Thyroid gland (tissue), 4 donors: ENCODE measurements at regions of chr2 and their contacts with region 1.

Region 1: GRCh38 chr2:237691908-237692600 is 64.7 kb downstream of the LRRFIP1 start:
- DNase-seq: peak; percentile 95 to 96
- H3K4me3 ChIP-seq: peak overlapping the region; percentile 47 to 88 (median 87)
- H3K27ac ChIP-seq: peak overlapping the region; percentile 87 to 97 (median 95)
- H3K4me1 ChIP-seq: peaks cover 55 to 81% of the 10 kb centered on the region in 2 donors
- H3K27me3 ChIP-seq: no peaks in the 10 kb centered on the region
- CTCF ChIP-seq: no peak
- POLR2A ChIP-seq: peak; percentile 78 to 85

Region 2: DNA sequence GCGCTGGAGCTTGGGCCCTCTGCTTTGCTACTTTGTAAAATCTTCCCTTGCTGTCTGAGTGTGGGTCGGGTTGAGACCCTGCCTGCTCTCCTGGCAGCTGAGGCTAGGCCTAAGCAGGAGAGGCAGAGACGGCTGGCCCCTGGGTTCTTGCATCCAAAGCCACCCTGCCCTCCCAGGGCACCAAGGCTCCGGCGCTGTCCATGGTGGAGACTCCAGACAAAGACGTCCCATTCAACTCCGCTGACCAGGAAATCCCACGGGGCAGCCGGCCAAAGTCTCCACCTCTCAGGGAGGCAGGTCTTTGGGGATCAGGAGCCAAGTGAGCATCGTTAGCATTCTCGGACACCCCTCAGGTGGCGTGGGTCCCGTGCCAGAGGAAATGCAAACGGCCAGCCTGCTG is 128.2 kb before region 1 on chr2:
- intact Hi-C with region 1: no loop called
- DNase-seq: peak in 1 of 2 donors; percentile 38
- H3K4me3 ChIP-seq: no peak overlapping the region
- H3K27ac ChIP-seq: no peak overlapping the region
- H3K4me1 ChIP-seq: peaks cover 7 to 8% of the 10 kb centered on the region in 2 donors
- H3K27me3 ChIP-seq: no peaks in the 10 kb centered on the region
- CTCF ChIP-seq: no peak
- POLR2A ChIP-seq: no peak

Region 3: DNA sequence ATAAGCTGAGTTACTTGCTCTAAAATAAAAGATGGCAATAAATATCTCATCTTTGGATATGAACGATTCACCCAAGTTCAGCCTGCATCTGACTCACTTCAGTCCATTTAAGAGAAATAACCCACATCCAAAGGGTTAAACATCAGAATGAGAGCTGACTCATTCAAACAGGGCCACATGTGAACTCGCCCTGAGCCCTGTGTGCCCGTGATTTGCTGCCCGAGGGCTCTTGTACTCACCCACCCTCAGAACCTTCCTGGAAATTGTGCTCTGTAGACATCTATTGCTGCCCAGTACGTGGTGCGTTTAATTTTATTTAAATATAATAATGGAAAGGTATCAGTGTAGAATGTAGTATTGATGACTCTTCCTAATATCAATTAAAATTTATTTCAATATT is 39.6 kb after region 1 on chr2:
- intact Hi-C with region 1: loop called (anchors 5 kb)
- DNase-seq: no peak
- H3K4me3 ChIP-seq: no peak overlapping the region
- H3K27ac ChIP-seq: peak overlapping the region in 2 of 3 donors; percentile 16 to 21
- H3K4me1 ChIP-seq: peaks cover 32 to 68% of the 10 kb centered on the region in 2 donors
- H3K27me3 ChIP-seq: no peaks in the 10 kb centered on the region
- CTCF ChIP-seq: no peak
- POLR2A ChIP-seq: no peak